Activated naive CD4-positive, alpha-beta T cell treated with anti-CD3 and anti-CD28 coated beads for 36 hours (primary cell): ENCODE measurements at regions of chr2 and their contacts with region 1.

Region 1: DNA sequence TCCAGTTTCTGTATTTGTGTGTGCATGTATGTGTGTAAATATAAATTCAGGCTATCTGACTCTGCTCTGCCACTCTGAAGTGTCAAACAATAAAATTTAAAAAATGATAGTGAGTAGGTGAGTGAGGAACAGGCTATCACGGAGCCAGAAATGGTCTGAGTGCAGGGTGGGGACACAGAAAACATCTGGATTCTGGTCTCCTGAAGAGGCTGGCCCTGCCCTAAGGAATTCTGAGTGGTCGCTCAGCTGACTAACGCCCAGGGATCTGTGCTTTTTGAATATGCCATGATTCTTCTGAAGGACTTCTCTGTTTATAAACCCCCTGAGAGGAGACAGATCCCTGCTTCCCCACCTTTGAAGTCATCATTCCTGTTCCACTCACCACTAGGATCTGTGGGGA is 353.9 kb upstream of the GYPC start:
- DNase-seq: no peak
- H3K4me3 Mint-ChIP-seq: no peak overlapping the region
- H3K27ac Mint-ChIP-seq: no peak overlapping the region
- H3K4me1 Mint-ChIP-seq: peaks cover 8% of the 10 kb centered on the region
- H3K27me3 Mint-ChIP-seq: peaks cover 11% of the 10 kb centered on the region

Region 2: DNA sequence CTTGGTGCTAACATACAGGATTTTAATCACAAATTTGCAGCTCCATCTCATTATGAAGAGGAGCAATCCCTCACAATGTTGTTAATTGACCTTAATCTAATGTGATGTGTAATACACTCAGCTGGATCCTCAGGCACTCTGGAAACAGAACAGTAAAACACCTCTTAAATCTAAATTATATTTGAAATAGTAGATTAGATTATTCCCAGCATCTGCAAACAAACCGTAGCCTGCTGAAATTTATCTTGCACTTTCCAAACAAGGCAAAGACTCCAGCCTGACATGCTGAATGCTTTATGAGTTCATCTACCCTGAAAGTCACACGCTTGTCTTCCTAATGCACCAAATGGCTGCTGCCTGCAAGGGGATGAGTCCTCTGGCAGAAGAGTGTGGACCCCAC is 48.4 kb before region 1 on chr2:
- CTCF ChIA-PET with region 1: no interaction called
- intact Hi-C with region 1: no loop called
- DNase-seq: no peak
- H3K4me3 Mint-ChIP-seq: no peak overlapping the region
- H3K27ac Mint-ChIP-seq: no peak overlapping the region
- H3K4me1 Mint-ChIP-seq: no peaks in the 10 kb centered on the region
- H3K27me3 Mint-ChIP-seq: peaks cover 3% of the 10 kb centered on the region

Region 3: GRCh38 chr2:126657636-126658318 is 355.7 kb after region 1 on chr2:
- CTCF ChIA-PET with region 1: no interaction called
- intact Hi-C with region 1: loop called (anchors 5 kb)
- DNase-seq: peak; percentile 87
- H3K4me3 Mint-ChIP-seq: peak overlapping the region; percentile 100
- H3K27ac Mint-ChIP-seq: peak overlapping the region; percentile 100
- H3K4me1 Mint-ChIP-seq: peaks cover 61% of the 10 kb centered on the region
- H3K27me3 Mint-ChIP-seq: no peaks in the 10 kb centered on the region

Region 4: GRCh38 chr2:126864861-126865260 is 562.8 kb after region 1 on chr2:
- CTCF ChIA-PET with region 1: no interaction called
- intact Hi-C with region 1: no loop called
- DNase-seq: peak; percentile 8
- H3K4me3 Mint-ChIP-seq: no peak overlapping the region
- H3K27ac Mint-ChIP-seq: no peak overlapping the region
- H3K4me1 Mint-ChIP-seq: no peaks in the 10 kb centered on the region
- H3K27me3 Mint-ChIP-seq: peaks cover 15% of the 10 kb centered on the region